ENCODE measurements at regions of chr3 and their contacts with region 1.

Region 1: GRCh38 chr3:179562591-179563270 is at the start of gene ACTL6A:
- DNase-seq: peak; percentile 100
- ATAC-seq: peak; percentile 98 to 99 (median 99)
- H3K4me3 ChIP-seq: peak within 1 kb of the TSS; percentile 78 to 97 (median 86)
- H3K27ac ChIP-seq: peak within 1 kb of the TSS; percentile 55 to 93 (median 88)
- H3K4me1 ChIP-seq: peaks cover 0 to 25% (median 16%) of the 10 kb centered on the region in 9 donors
- H3K27me3 ChIP-seq: no peaks in the 10 kb centered on the region
- CTCF ChIP-seq: no peak
- total RNA-seq, gene ACTL6A: 13.5 to 22.5 (median 17.2) TPM

Region 2: DNA sequence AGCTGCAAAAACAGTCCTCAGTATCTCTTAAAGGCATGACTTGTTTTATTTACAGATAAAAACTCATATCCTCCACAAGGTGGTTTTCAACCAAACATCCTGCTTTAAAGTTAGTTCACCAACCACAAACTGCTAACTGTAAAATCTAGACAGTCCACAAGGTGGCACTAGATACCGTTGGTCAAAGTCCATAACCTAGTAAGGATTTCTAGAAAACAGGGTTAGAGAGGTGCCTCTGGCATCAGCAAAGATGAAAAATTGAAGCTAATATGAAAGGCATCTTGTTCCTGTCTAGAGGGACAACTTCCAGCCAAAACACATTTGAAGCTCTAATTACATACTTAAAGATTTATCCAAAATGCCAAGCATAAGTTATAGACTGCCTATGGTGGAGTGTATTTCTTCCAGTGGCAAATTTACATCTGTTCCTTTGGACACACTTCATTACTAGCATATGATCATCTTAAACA is 547.1 kb before region 1 on chr3:
- intact Hi-C with region 1: loop called in 1 of 10 experiments (anchors 5 kb)
- DNase-seq: peak in 1 of 2 donors; percentile 56
- ATAC-seq: peak in 6 of 8 donors; percentile 55 to 83 (median 72)
- H3K4me3 ChIP-seq: no peak overlapping the region
- H3K27ac ChIP-seq: no peak overlapping the region
- H3K4me1 ChIP-seq: peaks cover 0 to 11% (median 10%) of the 10 kb centered on the region in 9 donors
- H3K27me3 ChIP-seq: no peaks in the 10 kb centered on the region
- CTCF ChIP-seq: peak; percentile 67 to 93 (median 87)

Region 3: GRCh38 chr3:179322286-179323196 is 240.2 kb before region 1 on chr3 and contains the start of gene ZNF639:
- intact Hi-C with region 1: loop called in 2 of 10 experiments (anchors 2 to 5 kb)
- DNase-seq: peak; percentile 80 to 88
- ATAC-seq: peak; percentile 87 to 95 (median 92)
- H3K4me3 ChIP-seq: peak within 1 kb of the TSS; percentile 82 to 99 (median 90)
- H3K27ac ChIP-seq: peak within 1 kb of the TSS; percentile 93 to 99 (median 97)
- H3K4me1 ChIP-seq: peaks cover 3 to 54% (median 31%) of the 10 kb centered on the region in 9 donors
- H3K27me3 ChIP-seq: no peaks in the 10 kb centered on the region
- CTCF ChIP-seq: peak; percentile 82 to 95 (median 86)
- total RNA-seq, gene ZNF639: 25.8 to 41.0 (median 30.6) TPM

Region 4: DNA sequence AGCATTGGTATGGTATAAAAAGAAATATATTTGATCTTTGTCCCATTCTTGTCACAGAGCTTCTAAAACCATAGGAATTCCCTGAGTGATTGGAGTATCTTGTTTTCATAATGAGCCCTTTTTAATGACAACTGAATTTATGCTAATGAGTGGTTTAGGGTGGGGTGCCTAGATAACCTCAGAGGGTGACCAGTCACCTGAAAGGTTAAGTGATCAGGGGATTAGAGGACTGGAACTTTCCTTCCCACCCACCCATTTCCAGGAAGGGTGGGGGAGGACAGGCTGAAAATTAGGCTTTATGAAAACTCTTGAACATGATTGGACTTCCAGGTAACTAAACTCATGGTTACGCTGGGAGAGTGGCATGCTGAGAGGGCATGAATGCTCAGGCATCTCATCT is 206.7 kb before region 1 on chr3:
- intact Hi-C with region 1: loop called in 1 of 10 experiments (anchors 10 kb)
- DNase-seq: no peak
- ATAC-seq: no peak
- H3K4me3 ChIP-seq: no peak overlapping the region
- H3K27ac ChIP-seq: no peak overlapping the region
- H3K4me1 ChIP-seq: peaks cover 0 to 3% (median 0%) of the 10 kb centered on the region in 9 donors
- H3K27me3 ChIP-seq: no peaks in the 10 kb centered on the region
- CTCF ChIP-seq: no peak

Region 5: GRCh38 chr3:179446501-179446900 is 116.2 kb before region 1 on chr3:
- intact Hi-C with region 1: loop called in 4 of 10 experiments (anchors 2 to 5 kb)
- DNase-seq: no peak
- ATAC-seq: no peak
- H3K4me3 ChIP-seq: no peak overlapping the region
- H3K27ac ChIP-seq: no peak overlapping the region
- H3K4me1 ChIP-seq: peaks cover 0 to 44% (median 35%) of the 10 kb centered on the region in 9 donors
- H3K27me3 ChIP-seq: no peaks in the 10 kb centered on the region
- CTCF ChIP-seq: peak in 8 of 9 donors; percentile 15 to 54 (median 46)

Region 6: GRCh38 chr3:179604321-179605078 is 41.8 kb after region 1 on chr3 and contains the starts of genes MRPL47 and NDUFB5:
- intact Hi-C with region 1: loop called in 2 of 10 experiments (anchors 1 to 5 kb)
- DNase-seq: peak; percentile 91 to 97
- ATAC-seq: peak; percentile 99 to 100 (median 100)
- H3K4me3 ChIP-seq: peak within 1 kb of the TSS; percentile 66 to 94 (median 86)
- H3K27ac ChIP-seq: peak within 1 kb of the TSS; percentile 89 to 98 (median 94)
- H3K4me1 ChIP-seq: peaks cover 0 to 57% (median 43%) of the 10 kb centered on the region in 9 donors
- H3K27me3 ChIP-seq: no peaks in the 10 kb centered on the region
- CTCF ChIP-seq: no peak
- total RNA-seq, gene MRPL47: 44.3 to 67.9 (median 51.7) TPM
- total RNA-seq, gene NDUFB5: 276 to 395 (median 379) TPM

Region 7: DNA sequence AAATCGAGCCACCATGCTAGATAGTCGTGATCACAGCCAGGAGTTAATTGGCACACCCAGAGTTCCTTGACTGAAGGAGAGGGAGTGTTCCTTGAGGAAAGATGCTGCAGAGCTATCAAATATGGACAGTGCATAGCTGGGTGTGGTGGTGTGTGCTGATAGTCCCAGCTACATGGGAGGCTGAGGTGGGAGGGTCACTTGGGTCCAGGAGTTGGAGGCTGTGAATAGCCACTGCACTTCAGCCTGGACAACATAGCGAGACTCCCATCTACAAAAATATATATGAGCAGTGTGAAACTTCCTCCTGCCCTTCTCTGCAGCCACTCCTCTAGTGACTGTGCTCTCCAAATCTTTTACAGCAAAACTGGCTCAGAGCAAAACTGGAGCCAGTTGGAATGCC is 80.1 kb after region 1 on chr3:
- intact Hi-C with region 1: no loop called
- DNase-seq: no peak
- ATAC-seq: no peak
- H3K4me3 ChIP-seq: no peak overlapping the region
- H3K27ac ChIP-seq: no peak overlapping the region
- H3K4me1 ChIP-seq: no peaks in the 10 kb centered on the region
- H3K27me3 ChIP-seq: no peaks in the 10 kb centered on the region
- CTCF ChIP-seq: no peak

Measured in heart right ventricle (tissue), 16 donors.